ENCODE measurements at regions of chr16 and their contacts with region 1.

Region 1: DNA sequence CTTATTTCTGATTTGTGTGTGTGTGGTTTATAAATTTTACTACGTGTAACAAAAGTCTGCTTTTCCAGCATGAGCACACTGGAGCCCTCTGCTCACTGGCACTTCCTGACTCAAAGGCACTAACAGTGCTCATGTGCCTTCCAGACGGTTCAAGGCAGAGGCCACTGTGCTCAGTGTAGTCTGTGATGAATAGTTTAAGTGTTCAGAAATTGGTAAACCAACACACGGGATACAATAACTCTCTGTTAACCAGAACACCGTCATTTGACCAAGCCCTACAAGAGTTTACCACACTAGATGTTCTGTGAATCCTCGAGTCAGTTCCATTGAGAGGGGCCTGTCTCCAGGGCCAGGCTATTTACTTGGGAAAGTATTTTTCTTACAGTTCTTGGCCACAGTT is 191.9 kb downstream of the MRTFB start:
- DNase-seq: no peak
- H3K4me3 ChIP-seq: no peak overlapping the region
- CTCF ChIP-seq: no peak

Region 2: DNA sequence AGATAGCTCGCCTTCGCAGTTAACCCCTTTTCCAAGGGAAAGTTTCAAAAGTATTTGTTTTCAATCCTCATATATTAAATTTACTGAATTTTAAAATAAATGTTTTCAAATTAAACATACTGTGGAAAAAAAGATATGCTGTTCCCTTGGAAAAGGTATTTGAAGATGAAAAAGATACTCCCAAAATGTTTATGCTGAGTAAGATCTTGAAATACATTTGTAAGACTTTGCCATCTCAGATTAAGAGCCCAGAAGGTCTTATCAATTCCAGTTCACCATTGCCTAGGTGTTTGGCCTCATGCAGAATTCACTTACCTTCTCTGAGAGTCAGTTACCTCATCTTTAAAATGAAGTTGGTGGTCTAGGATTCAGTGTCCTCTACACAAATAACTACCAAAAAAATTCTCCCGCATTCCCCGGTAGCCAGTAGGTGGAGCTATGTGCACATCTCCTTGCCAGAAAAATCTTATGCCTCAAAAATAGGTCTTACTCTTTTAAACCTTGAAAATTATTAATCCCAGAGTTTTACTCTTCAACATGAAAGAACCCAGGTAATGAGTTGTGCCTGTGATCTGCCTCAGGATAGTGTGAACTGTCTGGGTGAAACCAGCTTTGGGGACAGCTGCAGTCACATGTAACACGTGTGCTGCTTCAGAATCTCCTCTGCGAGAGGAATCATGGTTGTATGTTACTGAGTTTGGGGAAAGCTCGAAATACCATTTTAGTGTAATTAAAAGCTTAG is 13.5 kb before region 1 on chr16:
- CTCF ChIA-PET with region 1: interaction called, 29 read pairs
- POLR2A ChIA-PET with region 1: no interaction called
- DNase-seq: no peak
- H3K4me3 ChIP-seq: no peak overlapping the region
- CTCF ChIP-seq: peak; percentile 71

Measured in AG04449 (cell line).